ENCODE measurements at regions of chr14 and their contacts with region 1.

Region 1: DNA sequence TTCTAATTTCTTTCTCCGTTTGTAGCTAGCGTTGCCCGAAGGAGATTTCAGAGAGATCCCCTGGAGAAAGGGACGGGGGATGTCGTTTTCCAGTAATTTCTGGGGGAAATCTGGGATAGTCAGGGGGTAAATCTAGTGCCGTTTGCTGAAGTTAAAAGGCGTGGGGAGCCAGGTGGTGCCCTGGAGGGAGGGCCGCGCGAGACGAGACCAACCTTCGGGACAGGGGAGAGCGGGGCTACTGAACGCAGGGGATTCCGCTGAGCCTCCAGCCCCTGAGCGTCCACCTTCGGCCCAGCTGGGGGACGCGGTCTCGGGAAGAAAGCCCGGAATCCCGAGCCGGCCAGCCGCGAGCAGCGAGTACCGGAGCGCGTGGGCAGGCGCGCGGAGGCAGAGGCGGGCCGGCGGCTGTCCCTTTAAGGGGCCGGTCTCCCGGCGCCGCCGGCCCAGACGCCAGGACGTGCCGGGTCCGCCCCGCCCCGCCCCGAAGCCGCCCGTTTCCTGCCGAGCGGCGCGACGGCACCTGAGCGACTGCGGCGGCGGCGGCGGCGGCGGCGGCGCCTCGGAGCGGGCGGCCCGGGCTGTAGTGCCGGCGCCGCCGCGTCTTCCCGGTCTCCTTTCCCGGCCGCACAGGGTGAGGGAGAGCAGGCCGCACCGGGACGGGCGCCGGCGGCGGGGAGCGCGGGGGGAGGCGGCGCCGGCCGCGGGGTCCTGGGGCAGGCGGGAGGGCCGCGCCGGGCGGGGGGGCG is at the start of gene KTN1:
- DNase-seq: peak; percentile 87
- H3K4me3 ChIP-seq: peak within 1 kb of the TSS; percentile 84 to 89 (median 88)
- H3K27ac ChIP-seq: peak within 1 kb of the TSS; percentile 80
- H3K4me1 ChIP-seq: peaks cover 22% of the 10 kb centered on the region
- H3K27me3 ChIP-seq: no peaks in the 10 kb centered on the region
- CTCF ChIP-seq: no peak
- total RNA-seq, gene KTN1: 117 to 150 TPM

Region 2: GRCh38 chr14:55446218-55446654 is 133.7 kb before region 1 on chr14:
- CTCF ChIA-PET with region 1: interaction called, 3 read pairs
- dilution Hi-C with region 1: no loop called
- in situ Hi-C with region 1: no loop called
- intact Hi-C with region 1: loop called (anchors 1 kb)
- DNase-seq: peak; percentile 67
- H3K4me3 ChIP-seq: no peak overlapping the region
- H3K27ac ChIP-seq: peak overlapping the region; percentile 56
- H3K4me1 ChIP-seq: peaks cover 33% of the 10 kb centered on the region
- H3K27me3 ChIP-seq: no peaks in the 10 kb centered on the region
- CTCF ChIP-seq: peak; percentile 53 to 74

Region 3: DNA sequence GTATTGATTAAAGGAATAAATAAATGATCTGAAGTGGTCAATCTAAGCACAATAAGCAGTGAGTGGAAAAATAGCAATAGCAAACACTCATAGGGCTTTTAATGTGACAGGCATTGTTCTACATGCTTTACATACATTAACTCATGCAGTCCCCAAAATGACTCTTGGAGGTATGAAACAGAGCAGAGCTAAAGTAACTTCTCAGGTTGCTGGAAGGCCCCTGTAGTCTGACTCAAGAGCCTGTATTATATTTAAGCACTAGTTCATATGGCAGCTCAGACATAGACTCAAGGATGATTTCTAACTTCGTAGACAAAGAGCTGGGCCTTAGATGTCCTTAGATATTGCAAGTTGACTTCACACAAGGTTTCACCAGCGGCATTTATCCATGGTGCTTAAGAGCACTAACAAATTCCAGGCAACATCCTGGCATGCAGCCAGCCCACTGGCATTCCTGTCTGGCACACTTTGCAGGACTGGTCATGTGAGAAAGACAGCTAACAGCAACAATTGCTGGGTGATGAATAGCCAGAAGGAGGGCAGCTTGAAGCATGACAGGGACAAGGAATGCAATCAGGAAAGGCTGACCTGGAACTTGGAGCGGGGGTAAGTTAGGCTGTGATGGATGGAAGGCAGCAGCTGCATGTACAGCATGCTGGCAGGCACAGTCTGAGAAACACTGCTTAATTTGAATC is 22.8 kb before region 1 on chr14:
- CTCF ChIA-PET with region 1: no interaction called
- dilution Hi-C with region 1: no loop called
- in situ Hi-C with region 1: no loop called
- intact Hi-C with region 1: loop called (anchors 1 kb)
- DNase-seq: peak; percentile 91
- H3K4me3 ChIP-seq: no peak overlapping the region
- H3K27ac ChIP-seq: no peak overlapping the region
- H3K4me1 ChIP-seq: peaks cover 19% of the 10 kb centered on the region
- H3K27me3 ChIP-seq: no peaks in the 10 kb centered on the region
- CTCF ChIP-seq: no peak

Region 4: DNA sequence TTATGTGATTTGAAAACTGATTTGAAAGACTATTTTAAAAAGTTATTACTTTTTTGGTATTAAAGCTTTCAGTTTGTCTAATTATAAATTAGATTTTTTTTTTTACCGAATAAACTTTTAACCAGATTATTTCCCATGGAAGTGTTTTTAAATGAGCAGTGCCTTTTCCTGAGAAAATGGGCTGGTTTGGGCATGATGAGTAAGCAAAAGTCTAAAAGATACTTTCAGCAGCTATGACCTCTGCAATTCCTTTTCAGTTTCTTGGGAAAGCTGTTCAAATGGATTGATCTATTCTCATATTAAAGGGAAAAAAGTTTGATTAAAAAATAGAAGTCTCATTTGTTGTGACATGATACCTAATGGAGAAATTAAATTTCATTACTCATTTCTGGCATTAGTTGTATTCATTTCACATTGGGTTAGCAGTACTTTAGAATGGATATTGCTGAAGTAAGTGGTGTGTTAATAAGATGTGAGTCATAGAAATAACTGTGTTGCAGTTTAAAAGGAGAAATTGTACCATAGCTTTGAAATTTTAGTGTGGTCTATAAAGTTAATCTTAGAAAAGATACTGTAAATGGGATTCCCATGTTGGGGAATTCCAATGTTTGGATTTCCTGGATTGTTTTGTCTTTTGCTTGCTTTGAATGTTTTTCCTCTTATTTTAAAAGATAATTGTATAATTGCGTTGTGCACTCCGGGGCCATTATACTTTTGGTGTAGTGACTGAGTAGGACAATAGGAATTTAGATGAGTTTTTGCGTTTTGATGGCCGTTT is 21.1 kb after region 1 on chr14:
- CTCF ChIA-PET with region 1: no interaction called
- dilution Hi-C with region 1: no loop called
- in situ Hi-C with region 1: no loop called
- intact Hi-C with region 1: loop called (anchors 2 kb)
- DNase-seq: peak; percentile 56
- H3K4me3 ChIP-seq: peak overlapping the region in 1 of 3 experiments; percentile 13
- H3K27ac ChIP-seq: peak overlapping the region; percentile 43
- H3K4me1 ChIP-seq: peaks cover 17% of the 10 kb centered on the region
- H3K27me3 ChIP-seq: no peaks in the 10 kb centered on the region
- CTCF ChIP-seq: no peak